ENCODE measurements at regions of chr9 and their contacts with region 1.

Region 1: GRCh38 chr9:83622939-83623678 is at the start of gene IDNK:
- DNase-seq: peak; percentile 78
- H3K4me3 Mint-ChIP-seq: peak within 1 kb of the TSS; percentile 90
- H3K27ac Mint-ChIP-seq: peak within 1 kb of the TSS; percentile 96
- H3K4me1 Mint-ChIP-seq: peaks cover 28% of the 10 kb centered on the region
- H3K27me3 Mint-ChIP-seq: peaks cover 7% of the 10 kb centered on the region

Region 2: GRCh38 chr9:83422527-83422926 is 200.6 kb before region 1 on chr9:
- CTCF ChIA-PET with region 1: no interaction called
- DNase-seq: no peak
- H3K4me3 Mint-ChIP-seq: no peak overlapping the region
- H3K27ac Mint-ChIP-seq: no peak overlapping the region
- H3K4me1 Mint-ChIP-seq: no peaks in the 10 kb centered on the region
- H3K27me3 Mint-ChIP-seq: no peaks in the 10 kb centered on the region

Region 3: DNA sequence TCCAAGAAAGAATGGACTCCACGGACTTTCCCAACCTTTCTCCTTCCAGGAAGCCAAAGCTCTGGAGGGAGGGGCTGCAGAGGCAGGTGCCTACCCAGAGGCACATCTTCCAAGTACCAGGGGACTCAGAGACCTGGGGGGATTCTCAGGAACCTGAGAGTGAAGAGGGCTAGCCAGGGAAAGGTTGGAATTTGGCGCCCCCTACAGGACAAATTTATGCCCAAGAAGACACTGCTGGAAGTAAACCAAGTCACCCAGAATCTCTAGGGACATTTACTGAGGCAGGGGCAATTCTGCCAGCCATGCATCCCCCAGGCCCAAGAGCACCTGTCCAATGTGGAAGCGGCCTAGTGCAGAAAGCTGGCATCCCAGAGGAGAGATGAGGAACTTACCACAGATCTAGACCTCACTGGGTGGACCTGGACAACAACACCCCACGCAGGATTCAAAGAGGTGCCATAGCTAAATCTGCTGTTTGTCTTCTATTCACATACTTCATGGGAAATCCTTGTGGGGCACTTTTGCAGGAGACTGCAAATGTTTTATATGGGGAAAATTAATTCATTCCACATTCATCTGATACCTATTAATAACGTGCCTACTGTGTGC is 26.1 kb before region 1 on chr9:
- CTCF ChIA-PET with region 1: no interaction called
- DNase-seq: peak; percentile 63
- H3K4me3 Mint-ChIP-seq: no peak overlapping the region
- H3K27ac Mint-ChIP-seq: no peak overlapping the region
- H3K4me1 Mint-ChIP-seq: no peaks in the 10 kb centered on the region
- H3K27me3 Mint-ChIP-seq: no peaks in the 10 kb centered on the region

Region 4: GRCh38 chr9:83649080-83649479 is 26.0 kb after region 1 on chr9:
- CTCF ChIA-PET with region 1: interaction called, 40 read pairs
- DNase-seq: peak; percentile 81
- H3K4me3 Mint-ChIP-seq: no peak overlapping the region
- H3K27ac Mint-ChIP-seq: no peak overlapping the region
- H3K4me1 Mint-ChIP-seq: no peaks in the 10 kb centered on the region
- H3K27me3 Mint-ChIP-seq: no peaks in the 10 kb centered on the region

Region 5: GRCh38 chr9:83765376-83765775 is 142.3 kb after region 1 on chr9:
- CTCF ChIA-PET with region 1: no interaction called
- DNase-seq: no peak
- H3K4me3 Mint-ChIP-seq: no peak overlapping the region
- H3K27ac Mint-ChIP-seq: no peak overlapping the region
- H3K4me1 Mint-ChIP-seq: no peaks in the 10 kb centered on the region
- H3K27me3 Mint-ChIP-seq: peaks cover 3% of the 10 kb centered on the region